PC-3 (cell line): ENCODE measurements at regions of chr12 and their contacts with region 1.

Region 1: GRCh38 chr12:111024205-111024801 is 103.9 kb upstream of the MYL2 start:
- DNase-seq: peak; percentile 84
- ATAC-seq: peak; percentile 100
- H3K4me3 ChIP-seq: no peak overlapping the region
- H3K27ac ChIP-seq: no peak overlapping the region
- H3K4me1 ChIP-seq: no peaks in the 10 kb centered on the region
- H3K27me3 ChIP-seq: peaks cover 39% of the 10 kb centered on the region
- CTCF ChIP-seq: peak; percentile 98

Region 2: DNA sequence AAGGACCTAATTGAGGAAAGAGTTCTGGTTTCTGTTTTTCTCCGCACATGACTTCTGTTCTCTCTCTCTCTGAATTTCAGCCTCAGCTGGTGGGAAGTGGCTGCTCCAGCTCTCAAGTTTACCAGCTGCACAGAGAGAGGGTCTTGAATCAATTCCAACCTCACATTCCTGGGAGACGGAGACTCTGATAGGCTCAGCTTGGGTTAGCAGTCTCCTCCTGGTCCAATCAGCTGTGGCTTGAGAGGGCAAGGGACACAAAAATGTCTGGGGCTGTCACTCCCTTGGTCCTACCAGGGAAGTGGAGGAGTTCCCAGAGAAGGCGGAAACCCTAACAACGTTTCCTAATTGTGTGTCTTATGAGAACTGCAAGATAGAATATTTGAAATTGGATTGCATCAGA is 170.5 kb before region 1 on chr12:
- CTCF ChIA-PET with region 1: interaction called, 11 read pairs
- POLR2A ChIA-PET with region 1: no interaction called
- intact Hi-C with region 1: no loop called
- DNase-seq: no peak
- ATAC-seq: no peak
- H3K4me3 ChIP-seq: no peak overlapping the region
- H3K27ac ChIP-seq: no peak overlapping the region
- H3K4me1 ChIP-seq: no peaks in the 10 kb centered on the region
- H3K27me3 ChIP-seq: peaks cover 16% of the 10 kb centered on the region
- CTCF ChIP-seq: no peak

Region 3: GRCh38 chr12:110937104-110937641 is 87.1 kb before region 1 on chr12:
- CTCF ChIA-PET with region 1: no interaction called
- POLR2A ChIA-PET with region 1: no interaction called
- intact Hi-C with region 1: loop called (anchors 5 kb)
- DNase-seq: peak; percentile 79
- ATAC-seq: peak; percentile 53
- H3K4me3 ChIP-seq: peak overlapping the region; percentile 23; the same call in 1 of the 2 replicates
- H3K27ac ChIP-seq: no peak overlapping the region
- H3K4me1 ChIP-seq: peaks cover 15% of the 10 kb centered on the region
- H3K27me3 ChIP-seq: no peaks in the 10 kb centered on the region
- CTCF ChIP-seq: peak; percentile 98

Region 4: GRCh38 chr12:111174251-111174960 is 150.1 kb after region 1 on chr12:
- CTCF ChIA-PET with region 1: no interaction called
- POLR2A ChIA-PET with region 1: no interaction called
- intact Hi-C with region 1: loop called (anchors 1 kb)
- DNase-seq: peak; percentile 62
- ATAC-seq: peak; percentile 57
- H3K4me3 ChIP-seq: no peak overlapping the region
- H3K27ac ChIP-seq: no peak overlapping the region
- H3K4me1 ChIP-seq: peaks cover 8% of the 10 kb centered on the region
- H3K27me3 ChIP-seq: peaks cover 40% of the 10 kb centered on the region
- CTCF ChIP-seq: peak; percentile 59

Region 5: GRCh38 chr12:111204788-111205241 is 180.5 kb after region 1 on chr12:
- CTCF ChIA-PET with region 1: no interaction called
- POLR2A ChIA-PET with region 1: no interaction called
- intact Hi-C with region 1: no loop called
- DNase-seq: no peak
- ATAC-seq: no peak
- H3K4me3 ChIP-seq: no peak overlapping the region
- H3K27ac ChIP-seq: no peak overlapping the region
- H3K4me1 ChIP-seq: no peaks in the 10 kb centered on the region
- H3K27me3 ChIP-seq: peaks cover 87% of the 10 kb centered on the region
- CTCF ChIP-seq: no peak

Region 6: DNA sequence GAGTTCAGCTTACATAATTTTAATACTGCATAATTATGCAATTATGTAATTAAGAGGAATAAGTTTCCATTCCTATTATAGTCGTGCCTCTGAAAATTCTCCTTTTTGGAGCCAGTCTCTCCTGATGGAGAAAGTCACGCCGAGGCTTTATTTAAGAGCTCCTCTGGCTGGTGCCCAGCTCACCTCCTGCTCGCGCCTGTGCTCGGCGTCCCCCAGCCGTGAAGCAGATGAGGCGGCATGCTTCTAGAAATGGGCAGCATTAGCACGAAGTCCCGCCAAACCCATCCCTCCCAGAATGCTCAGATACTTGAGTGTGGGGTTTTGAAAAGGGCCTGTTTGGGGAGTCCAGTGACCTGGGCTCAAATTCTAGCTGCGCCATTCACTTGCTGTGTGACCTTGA is 191.6 kb after region 1 on chr12:
- CTCF ChIA-PET with region 1: no interaction called
- POLR2A ChIA-PET with region 1: no interaction called
- intact Hi-C with region 1: no loop called
- DNase-seq: no peak
- ATAC-seq: no peak
- H3K4me3 ChIP-seq: no peak overlapping the region
- H3K27ac ChIP-seq: no peak overlapping the region
- H3K4me1 ChIP-seq: no peaks in the 10 kb centered on the region
- H3K27me3 ChIP-seq: peaks cover 78% of the 10 kb centered on the region
- CTCF ChIP-seq: no peak

Region 7: DNA sequence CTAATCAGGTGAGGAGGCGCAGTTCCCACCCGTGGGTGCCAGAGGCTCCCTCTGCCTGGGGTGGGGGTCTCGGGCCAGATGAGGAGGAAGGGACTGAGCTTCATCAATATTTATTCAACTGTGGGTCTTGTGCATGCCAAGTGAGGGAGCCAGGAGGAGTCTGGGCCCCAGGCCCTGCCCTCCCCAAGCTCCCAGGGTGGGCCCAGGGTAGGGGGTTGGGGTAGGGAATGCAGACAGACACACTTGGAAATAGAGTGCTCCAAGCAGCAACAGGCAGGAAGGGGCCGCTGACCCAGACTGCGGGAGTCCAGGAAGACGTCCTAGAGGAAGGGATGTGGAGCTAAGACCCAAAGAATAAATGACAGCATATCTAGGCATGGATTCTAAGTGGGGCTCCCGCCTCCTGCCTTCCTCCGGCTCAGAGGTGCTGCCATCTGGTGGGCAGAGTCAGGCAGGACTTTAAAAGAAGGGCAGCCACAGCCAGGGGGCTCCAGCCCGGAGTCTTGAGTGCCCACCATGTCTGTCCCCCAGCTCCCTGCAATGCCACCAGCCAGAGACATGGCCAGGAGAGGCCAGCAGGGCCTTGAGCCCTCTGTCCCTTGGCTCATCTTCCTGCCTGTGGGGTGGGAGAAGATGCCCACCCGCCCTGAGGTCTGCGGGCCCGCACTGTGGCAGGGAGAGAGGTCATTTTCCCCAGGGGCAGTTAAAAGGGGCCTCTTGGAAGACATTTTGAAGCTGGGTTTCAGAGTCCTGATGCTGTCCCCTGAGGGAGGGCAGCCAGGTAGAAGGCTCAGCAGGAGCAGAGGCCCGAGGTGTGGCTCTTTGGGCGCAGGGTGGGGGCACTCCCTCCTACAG is 274.5 kb after region 1 on chr12:
- CTCF ChIA-PET with region 1: interaction called, 5 read pairs
- POLR2A ChIA-PET with region 1: no interaction called
- intact Hi-C with region 1: loop called (anchors 1 kb)
- DNase-seq: peak; percentile 76
- ATAC-seq: peak; percentile 92
- H3K4me3 ChIP-seq: no peak overlapping the region
- H3K27ac ChIP-seq: no peak overlapping the region
- H3K4me1 ChIP-seq: no peaks in the 10 kb centered on the region
- H3K27me3 ChIP-seq: peaks cover 4% of the 10 kb centered on the region; the same call in 1 of the 2 replicates
- CTCF ChIP-seq: peak; percentile 96